Right lobe of liver (tissue), 6 donors: ENCODE measurements at regions of chr6 and their contacts with region 1.

Region 1: GRCh38 chr6:30828027-30828960 is 56.0 kb upstream of the DDR1 start:
- DNase-seq: peak; percentile 87 to 90 (median 88)
- ATAC-seq: peak; percentile 94 to 97 (median 96)
- H3K4me3 ChIP-seq: peak overlapping the region in 1 of 3 donors; percentile 15
- H3K27ac ChIP-seq: peak overlapping the region; percentile 49 to 74 (median 65)
- H3K4me1 ChIP-seq: peaks cover 0 to 10% (median 2%) of the 10 kb centered on the region in 4 donors
- H3K27me3 ChIP-seq: no peaks in the 10 kb centered on the region
- CTCF ChIP-seq: peak; percentile 90 to 97 (median 92)
- POLR2A ChIP-seq: peak; percentile 24

Region 2: GRCh38 chr6:30877419-30878371 is 49.4 kb after region 1 on chr6:
- intact Hi-C with region 1: loop called (anchors 5 to 10 kb)
- DNase-seq: peak; percentile 87 to 89 (median 89)
- ATAC-seq: peak; percentile 96 to 99 (median 96)
- H3K4me3 ChIP-seq: peak overlapping the region; percentile 15 to 54 (median 41)
- H3K27ac ChIP-seq: peak overlapping the region; percentile 25 to 69 (median 36)
- H3K4me1 ChIP-seq: peaks cover 0 to 3% (median 0%) of the 10 kb centered on the region in 4 donors
- H3K27me3 ChIP-seq: no peaks in the 10 kb centered on the region
- CTCF ChIP-seq: peak; percentile 85 to 95 (median 88)
- POLR2A ChIP-seq: peak; percentile 38

Region 3: GRCh38 chr6:30883685-30884520 is 55.6 kb after region 1 on chr6 and contains the start of gene DDR1:
- intact Hi-C with region 1: loop called (anchors 5 to 10 kb)
- DNase-seq: peak; percentile 57 to 72 (median 68)
- ATAC-seq: peak; percentile 64 to 77 (median 70)
- H3K4me3 ChIP-seq: peak within 1 kb of the TSS; percentile 55 to 68 (median 61)
- H3K27ac ChIP-seq: peak within 1 kb of the TSS in 1 of 3 donors; percentile 0
- H3K4me1 ChIP-seq: no peaks in the 10 kb centered on the region
- H3K27me3 ChIP-seq: no peaks in the 10 kb centered on the region
- CTCF ChIP-seq: no peak
- POLR2A ChIP-seq: no peak
- total RNA-seq, gene DDR1: 3.2 to 9.9 (median 5.0) TPM